GM10248 (cell line): ENCODE measurements at regions of chr3 and their contacts with region 1.

Region 1: GRCh38 chr3:61936344-61936937 is 375.1 kb downstream of the PTPRG start:
- DNase-seq: peak; percentile 35
- CTCF ChIP-seq: peak; percentile 57

Region 2: GRCh38 chr3:61947456-61947855 is 11.0 kb after region 1 on chr3:
- CTCF ChIA-PET with region 1: interaction called, 25 read pairs
- POLR2A ChIA-PET with region 1: no interaction called
- DNase-seq: no peak
- CTCF ChIP-seq: no peak